ENCODE measurements at regions of chr6 and their contacts with region 1.

Region 1: GRCh38 chr6:125790358-125791150 is at the start of gene NCOA7:
- DNase-seq: peak; percentile 83
- H3K4me3 Mint-ChIP-seq: peak within 1 kb of the TSS; percentile 90
- H3K27ac Mint-ChIP-seq: peak within 1 kb of the TSS; percentile 96
- H3K4me1 Mint-ChIP-seq: peaks cover 55% of the 10 kb centered on the region
- H3K27me3 Mint-ChIP-seq: no peaks in the 10 kb centered on the region
- total RNA-seq, gene NCOA7: 45.2 to 49.9 TPM

Region 2: GRCh38 chr6:125779924-125780539 is 10.5 kb before region 1 on chr6:
- CTCF ChIA-PET with region 1: interaction called, 98 read pairs
- POLR2A ChIA-PET with region 1: interaction called, 299 read pairs
- DNase-seq: peak; percentile 86
- H3K4me3 Mint-ChIP-seq: no peak overlapping the region
- H3K27ac Mint-ChIP-seq: no peak overlapping the region
- H3K4me1 Mint-ChIP-seq: peaks cover 13% of the 10 kb centered on the region
- H3K27me3 Mint-ChIP-seq: peaks cover 18% of the 10 kb centered on the region

Region 3: DNA sequence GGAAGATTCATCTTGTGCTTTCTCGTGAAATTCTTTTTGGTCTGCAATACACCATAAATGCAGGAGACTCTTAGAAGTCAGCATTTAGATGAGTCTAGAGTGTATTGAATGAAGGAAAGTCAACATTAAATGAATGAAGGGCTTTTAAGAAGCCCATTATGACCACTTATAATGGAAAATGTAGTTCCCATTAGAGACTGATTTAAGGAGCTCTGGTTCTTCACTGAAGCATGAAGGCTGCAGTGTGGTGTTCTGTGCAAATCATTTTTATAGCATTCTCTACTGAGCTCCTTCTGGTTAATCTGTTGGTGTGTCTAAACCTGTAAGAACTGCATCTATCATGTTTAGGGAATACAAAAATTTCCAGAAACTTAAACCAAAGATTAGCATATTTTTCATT is 19.9 kb after region 1 on chr6:
- CTCF ChIA-PET with region 1: interaction called, 16 read pairs
- POLR2A ChIA-PET with region 1: interaction called, 41 read pairs
- DNase-seq: no peak
- H3K4me3 Mint-ChIP-seq: no peak overlapping the region
- H3K27ac Mint-ChIP-seq: no peak overlapping the region
- H3K4me1 Mint-ChIP-seq: peaks cover 47% of the 10 kb centered on the region
- H3K27me3 Mint-ChIP-seq: no peaks in the 10 kb centered on the region

Region 4: GRCh38 chr6:125906158-125906998 is 115.8 kb after region 1 on chr6:
- CTCF ChIA-PET with region 1: interaction called, 46 read pairs
- POLR2A ChIA-PET with region 1: interaction called, 15 read pairs
- DNase-seq: peak; percentile 45
- H3K4me3 Mint-ChIP-seq: no peak overlapping the region
- H3K27ac Mint-ChIP-seq: no peak overlapping the region
- H3K4me1 Mint-ChIP-seq: peaks cover 52% of the 10 kb centered on the region
- H3K27me3 Mint-ChIP-seq: no peaks in the 10 kb centered on the region

Region 5: GRCh38 chr6:125923987-125924568 is 133.5 kb after region 1 on chr6:
- CTCF ChIA-PET with region 1: interaction called, 20 read pairs
- POLR2A ChIA-PET with region 1: interaction called, 28 read pairs
- DNase-seq: peak; percentile 45
- H3K4me3 Mint-ChIP-seq: no peak overlapping the region
- H3K27ac Mint-ChIP-seq: peak overlapping the region; percentile 58
- H3K4me1 Mint-ChIP-seq: peaks cover 49% of the 10 kb centered on the region
- H3K27me3 Mint-ChIP-seq: no peaks in the 10 kb centered on the region

Region 6: GRCh38 chr6:125986300-125987025 is 195.9 kb after region 1 on chr6 and contains the start of gene TRMT11:
- CTCF ChIA-PET with region 1: interaction called, 16 read pairs
- POLR2A ChIA-PET with region 1: interaction called, 34 read pairs
- DNase-seq: peak; percentile 79
- H3K4me3 Mint-ChIP-seq: peak within 1 kb of the TSS; percentile 3
- H3K27ac Mint-ChIP-seq: no peak within 1 kb of the TSS
- H3K4me1 Mint-ChIP-seq: peaks cover 14% of the 10 kb centered on the region
- H3K27me3 Mint-ChIP-seq: no peaks in the 10 kb centered on the region
- total RNA-seq, gene TRMT11: 17.6 to 19.2 TPM

Region 7: DNA sequence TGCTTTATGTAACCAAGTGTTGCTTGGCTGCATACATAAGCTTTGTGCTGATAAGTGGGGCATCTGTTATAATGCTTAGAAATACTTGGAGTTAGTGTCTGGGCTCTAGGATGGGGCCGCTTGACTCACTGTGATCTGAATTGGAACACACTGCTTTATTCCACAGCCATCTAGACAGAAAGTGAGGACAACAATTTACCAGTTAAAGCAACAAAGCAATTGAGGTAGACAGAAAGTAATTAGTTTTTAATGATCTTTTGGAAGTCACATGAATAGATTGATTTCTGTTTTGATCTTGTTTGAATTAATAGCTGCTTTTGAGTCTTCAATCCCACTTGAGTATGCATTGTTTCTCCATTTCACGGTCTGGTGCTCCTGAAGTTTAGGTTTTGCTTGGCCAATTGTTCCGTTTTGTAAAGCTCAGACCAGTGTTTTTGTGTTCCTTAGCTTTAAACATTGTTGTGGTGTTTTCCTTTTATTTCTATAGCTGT is 353.3 kb after region 1 on chr6:
- CTCF ChIA-PET with region 1: no interaction called
- POLR2A ChIA-PET with region 1: no interaction called
- DNase-seq: no peak
- H3K4me3 Mint-ChIP-seq: no peak overlapping the region
- H3K27ac Mint-ChIP-seq: no peak overlapping the region
- H3K4me1 Mint-ChIP-seq: no peaks in the 10 kb centered on the region
- H3K27me3 Mint-ChIP-seq: no peaks in the 10 kb centered on the region

Measured in activated CD4-positive, alpha-beta memory T cell treated with anti-CD3 and anti-CD28 coated beads, Interleukin-2, amount 10 ng/mL, durations not matched to agents 7 days and 5 days (primary cell).